Activated naive CD4-positive, alpha-beta T cell treated with anti-CD3 and anti-CD28 coated beads for 36 hours (primary cell): ENCODE measurements at regions of chr7 and their contacts with region 1.

Region 1: DNA sequence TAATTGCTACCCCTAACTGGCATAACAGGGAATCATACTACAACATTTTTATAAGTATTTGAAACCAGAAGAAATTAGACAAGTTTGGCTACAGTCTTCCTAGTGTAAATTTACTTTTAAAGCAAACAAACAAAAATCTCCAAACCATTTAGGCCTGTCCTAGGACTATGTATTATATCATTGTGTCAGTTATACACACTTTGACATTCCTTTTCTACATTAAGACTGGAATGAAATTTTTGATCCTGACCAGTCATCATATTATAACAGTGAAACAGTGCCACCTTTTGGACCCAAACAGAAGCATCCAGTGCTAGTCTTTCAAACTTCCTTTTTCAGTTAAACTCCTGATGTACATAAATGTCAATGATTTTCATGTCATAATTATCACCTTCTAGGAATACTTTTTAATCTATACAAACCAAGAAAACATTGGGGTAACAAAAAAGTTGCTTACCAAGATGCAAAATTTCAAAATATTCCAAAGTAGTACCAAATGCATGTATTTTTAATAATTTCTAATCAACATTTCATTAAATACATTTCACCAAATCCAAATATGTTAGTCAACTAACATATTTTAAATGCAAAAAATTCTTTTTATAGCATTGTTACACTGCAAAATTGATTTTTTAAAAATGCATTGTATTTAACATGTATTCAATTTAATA is 75.7 kb downstream of the IMMP2L start:
- DNase-seq: peak; percentile 15
- H3K4me3 Mint-ChIP-seq: no peak overlapping the region
- H3K27ac Mint-ChIP-seq: no peak overlapping the region
- H3K4me1 Mint-ChIP-seq: no peaks in the 10 kb centered on the region
- H3K27me3 Mint-ChIP-seq: no peaks in the 10 kb centered on the region

Region 2: GRCh38 chr7:109844362-109844761 is 1642.2 kb before region 1 on chr7:
- CTCF ChIA-PET with region 1: no interaction called
- intact Hi-C with region 1: loop called (anchors 1 kb)
- DNase-seq: peak; percentile 18
- H3K4me3 Mint-ChIP-seq: no peak overlapping the region
- H3K27ac Mint-ChIP-seq: no peak overlapping the region
- H3K4me1 Mint-ChIP-seq: no peaks in the 10 kb centered on the region
- H3K27me3 Mint-ChIP-seq: peaks cover 10% of the 10 kb centered on the region

Region 3: DNA sequence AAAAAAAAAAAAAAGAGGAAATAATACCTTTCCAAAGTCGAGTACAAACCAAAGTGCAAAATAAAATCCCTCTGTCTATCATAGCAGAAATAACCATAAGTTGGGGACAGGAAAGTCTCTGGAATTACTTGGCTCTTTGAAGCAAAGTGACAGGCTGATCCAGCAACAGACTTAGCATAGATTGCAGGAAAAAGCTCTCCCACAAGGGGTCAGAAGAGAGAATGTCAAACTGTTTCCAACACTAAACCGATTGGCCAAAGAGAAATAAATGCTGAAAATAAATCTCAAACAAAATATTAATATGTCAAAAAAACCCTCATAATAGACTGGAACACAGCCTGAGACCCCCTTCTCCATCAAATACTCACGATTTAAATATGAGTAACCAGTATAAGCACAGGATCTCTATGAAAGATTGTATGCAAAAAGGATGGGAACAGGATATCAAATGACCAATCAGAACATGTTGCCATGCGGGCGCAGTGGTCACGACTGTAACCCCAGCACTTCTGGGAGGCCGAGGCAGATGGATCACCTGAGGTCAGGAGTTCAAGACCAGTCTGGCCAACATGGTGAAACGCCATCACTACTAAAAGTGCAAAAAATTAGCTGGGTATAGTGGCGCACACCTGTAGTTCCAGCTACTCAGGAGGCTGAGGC is 1396.4 kb before region 1 on chr7:
- CTCF ChIA-PET with region 1: no interaction called
- intact Hi-C with region 1: loop called (anchors 5 kb)
- DNase-seq: no peak
- H3K4me3 Mint-ChIP-seq: no peak overlapping the region
- H3K27ac Mint-ChIP-seq: no peak overlapping the region
- H3K4me1 Mint-ChIP-seq: no peaks in the 10 kb centered on the region
- H3K27me3 Mint-ChIP-seq: peaks cover 2% of the 10 kb centered on the region

Region 4: DNA sequence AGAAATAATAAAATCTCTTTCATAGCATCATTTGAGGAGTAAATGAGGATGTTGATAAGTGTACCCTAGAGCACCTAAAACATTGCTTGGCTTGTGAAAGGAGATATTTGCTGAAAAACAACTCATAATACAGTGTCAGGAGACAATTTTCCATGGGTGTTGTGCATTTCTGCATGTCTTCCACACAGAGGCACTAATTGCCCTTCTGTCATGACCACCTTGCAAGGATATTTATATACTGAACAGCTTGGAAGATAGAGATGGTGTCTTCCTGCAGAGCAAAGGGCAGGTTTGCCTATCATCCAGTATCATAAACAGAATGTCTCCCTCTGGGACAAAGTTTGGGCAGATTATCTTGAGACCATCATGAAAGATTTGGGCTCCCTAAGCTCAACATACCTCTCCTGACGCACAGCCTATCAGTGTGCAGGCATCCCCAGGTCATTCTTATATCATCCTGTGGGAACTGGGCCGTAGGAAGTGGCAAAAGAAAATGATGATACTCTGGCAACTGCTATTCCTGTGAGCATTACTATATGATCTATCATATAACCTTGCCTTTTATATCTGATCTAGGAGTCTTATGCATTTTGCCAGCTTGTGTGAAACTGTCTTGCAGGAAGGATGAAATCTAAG is 890.8 kb before region 1 on chr7:
- CTCF ChIA-PET with region 1: no interaction called
- intact Hi-C with region 1: loop called (anchors 1 kb)
- DNase-seq: no peak
- H3K4me3 Mint-ChIP-seq: no peak overlapping the region
- H3K27ac Mint-ChIP-seq: no peak overlapping the region
- H3K4me1 Mint-ChIP-seq: no peaks in the 10 kb centered on the region
- H3K27me3 Mint-ChIP-seq: no peaks in the 10 kb centered on the region

Region 5: GRCh38 chr7:111137296-111138195 is 349.1 kb before region 1 on chr7:
- CTCF ChIA-PET with region 1: no interaction called
- intact Hi-C with region 1: no loop called
- DNase-seq: peak; percentile 59
- H3K4me3 Mint-ChIP-seq: peak overlapping the region; percentile 62
- H3K27ac Mint-ChIP-seq: peak overlapping the region; percentile 92
- H3K4me1 Mint-ChIP-seq: peaks cover 32% of the 10 kb centered on the region
- H3K27me3 Mint-ChIP-seq: no peaks in the 10 kb centered on the region

Region 6: DNA sequence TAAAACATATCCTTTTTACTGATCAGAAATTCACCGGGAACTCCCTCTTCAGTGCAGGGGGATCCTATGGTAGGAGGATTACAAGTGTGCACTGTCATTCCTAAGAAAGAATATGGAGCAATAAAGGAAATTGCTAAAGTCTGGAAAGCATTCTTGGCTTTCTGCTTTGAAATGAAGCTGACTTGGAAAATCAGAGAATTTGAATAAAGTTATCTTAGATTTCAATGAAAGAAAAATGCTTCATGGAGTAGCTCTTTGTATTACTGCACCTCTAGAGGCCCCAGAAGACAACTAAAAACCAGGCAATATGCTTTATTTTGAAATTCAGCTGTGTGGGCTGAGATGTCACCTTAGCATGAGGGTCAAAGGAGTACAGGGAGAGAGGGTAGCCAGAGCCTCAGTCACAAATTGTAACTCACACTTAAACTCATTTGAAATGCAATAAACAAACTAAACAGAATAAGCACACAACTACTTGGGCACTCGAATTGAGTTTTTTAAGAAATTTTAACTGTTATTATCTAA is 26.8 kb before region 1 on chr7:
- CTCF ChIA-PET with region 1: no interaction called
- intact Hi-C with region 1: no loop called
- DNase-seq: no peak
- H3K4me3 Mint-ChIP-seq: no peak overlapping the region
- H3K27ac Mint-ChIP-seq: no peak overlapping the region
- H3K4me1 Mint-ChIP-seq: no peaks in the 10 kb centered on the region
- H3K27me3 Mint-ChIP-seq: no peaks in the 10 kb centered on the region

Region 7: GRCh38 chr7:111730476-111731300 is 244.1 kb after region 1 on chr7:
- CTCF ChIA-PET with region 1: interaction called, 3 read pairs
- intact Hi-C with region 1: loop called (anchors 5 kb)
- DNase-seq: peak; percentile 12
- H3K4me3 Mint-ChIP-seq: no peak overlapping the region
- H3K27ac Mint-ChIP-seq: no peak overlapping the region
- H3K4me1 Mint-ChIP-seq: no peaks in the 10 kb centered on the region
- H3K27me3 Mint-ChIP-seq: peaks cover 4% of the 10 kb centered on the region